A549 (cell line): ENCODE measurements at regions of chr1 and their contacts with region 1.

Region 1: GRCh38 chr1:148372731-148373130 is 110.4 kb downstream of the PPIAL4G start:
- DNase-seq: no peak
- ATAC-seq: no peak
- H3K4me3 ChIP-seq: no peak overlapping the region
- H3K27ac ChIP-seq: peak overlapping the region in 1 of 2 experiments; percentile 6; a peak in 1 of 6 replicates
- H3K4me1 ChIP-seq: peaks cover 10% of the 10 kb centered on the region; the same call in 2 of the 3 replicates
- CTCF ChIP-seq: no peak
- EP300 ChIP-seq: no peak
- POLR2A ChIP-seq: no peak
- RAD21 ChIP-seq: no peak

Region 2: GRCh38 chr1:148328884-148329283 is 43.8 kb before region 1 on chr1:
- CTCF ChIA-PET with region 1: no interaction called
- POLR2A ChIA-PET with region 1: no interaction called
- DNase-seq: no peak
- ATAC-seq: no peak
- H3K4me3 ChIP-seq: no peak overlapping the region
- H3K27ac ChIP-seq: no peak overlapping the region
- H3K4me1 ChIP-seq: 0 out of 3 replicates have a peak, but pooled peaks cover 3% of the 10 kb centered on the region
- CTCF ChIP-seq: no peak
- EP300 ChIP-seq: no peak
- POLR2A ChIP-seq: no peak
- RAD21 ChIP-seq: no peak

Region 3: DNA sequence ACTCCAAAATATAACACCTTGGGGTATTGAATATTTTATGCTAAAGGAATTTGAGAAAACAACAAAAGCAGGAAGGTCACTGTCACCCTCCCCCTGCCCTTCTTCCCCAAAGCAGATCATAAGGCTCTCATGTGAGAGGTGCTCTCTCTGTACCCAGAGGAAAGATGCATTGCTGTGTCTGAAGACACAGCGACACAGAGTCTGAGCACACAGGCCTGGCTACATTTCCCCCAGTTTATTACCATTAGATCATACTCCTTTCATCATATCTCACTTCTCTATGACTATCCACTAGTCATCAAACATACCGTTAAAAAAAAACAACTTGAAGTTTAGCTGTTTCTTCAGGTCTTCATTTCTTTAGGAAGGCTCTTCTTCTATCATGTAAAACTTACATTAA is 16.8 kb before region 1 on chr1:
- CTCF ChIA-PET with region 1: interaction called, 30 read pairs
- POLR2A ChIA-PET with region 1: no interaction called
- DNase-seq: no peak
- ATAC-seq: no peak
- H3K4me3 ChIP-seq: no peak overlapping the region
- H3K27ac ChIP-seq: no peak overlapping the region
- H3K4me1 ChIP-seq: peaks cover 7% of the 10 kb centered on the region; the same call in 1 of the 3 replicates
- CTCF ChIP-seq: no peak
- EP300 ChIP-seq: no peak
- POLR2A ChIP-seq: no peak
- RAD21 ChIP-seq: no peak

Region 4: GRCh38 chr1:148388260-148389027 is 15.7 kb after region 1 on chr1:
- CTCF ChIA-PET with region 1: interaction called, 14 read pairs
- POLR2A ChIA-PET with region 1: interaction called, 4 read pairs
- DNase-seq: peak; percentile 94 to 97
- ATAC-seq: peak; percentile 92 to 96
- H3K4me3 ChIP-seq: peak overlapping the region; percentile 54
- H3K27ac ChIP-seq: peak overlapping the region; percentile 91 to 93
- H3K4me1 ChIP-seq: peaks cover 5% of the 10 kb centered on the region; the same call in 1 of the 3 replicates
- CTCF ChIP-seq: no peak
- EP300 ChIP-seq: no peak
- POLR2A ChIP-seq: peak; percentile 63
- RAD21 ChIP-seq: no peak